Activated CD4-positive, alpha-beta T cell treated with anti-CD3 and anti-CD28 coated beads, Interleukin-2, amount 10 ng/mL, durations not matched to agents 7 days and 5 days (primary cell): ENCODE measurements at regions of chr14 and their contacts with region 1.

Region 1: DNA sequence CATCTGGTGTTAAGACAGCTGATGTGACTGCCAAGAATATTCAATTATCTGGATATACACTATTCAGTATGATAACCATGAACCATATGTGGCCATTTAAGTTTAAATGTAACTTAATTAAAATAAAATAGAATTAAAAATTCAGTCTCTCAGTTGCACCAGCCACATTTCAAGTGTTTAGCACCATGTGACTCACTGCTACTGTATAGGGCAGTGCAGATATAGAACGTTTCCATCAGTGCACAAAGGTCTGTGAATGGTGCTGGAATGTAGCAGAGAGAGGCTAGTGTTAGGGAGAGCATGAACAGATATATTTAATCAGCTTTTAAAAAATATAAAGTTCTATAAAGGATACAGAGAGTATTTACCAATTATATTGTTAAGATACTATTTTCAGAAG is 28.7 kb downstream of the ARID4A start:
- DNase-seq: no peak
- H3K4me3 Mint-ChIP-seq: no peak overlapping the region
- H3K27ac Mint-ChIP-seq: no peak overlapping the region
- H3K4me1 Mint-ChIP-seq: peaks cover 12% of the 10 kb centered on the region
- H3K27me3 Mint-ChIP-seq: no peaks in the 10 kb centered on the region

Region 2: GRCh38 chr14:58313699-58314098 is 13.3 kb before region 1 on chr14:
- CTCF ChIA-PET with region 1: interaction called, 10 read pairs
- POLR2A ChIA-PET with region 1: interaction called, 3 read pairs
- DNase-seq: no peak
- H3K4me3 Mint-ChIP-seq: no peak overlapping the region
- H3K27ac Mint-ChIP-seq: no peak overlapping the region
- H3K4me1 Mint-ChIP-seq: no peaks in the 10 kb centered on the region
- H3K27me3 Mint-ChIP-seq: no peaks in the 10 kb centered on the region